ENCODE measurements at regions of chr13 and their contacts with region 1.

Region 1: GRCh38 chr13:71879129-71879535 is 12.1 kb upstream of the DACH1 start:
- DNase-seq: peak in 4 of 9 donors; percentile 18 to 49 (median 34)
- ATAC-seq: peak; percentile 75
- H3K4me3 ChIP-seq: no peak overlapping the region
- H3K4me3 Mint-ChIP-seq: peak overlapping the region in 1 of 10 donors; percentile 36
- H3K27ac ChIP-seq: no peak overlapping the region
- H3K27ac Mint-ChIP-seq: no peak overlapping the region
- H3K4me1 ChIP-seq: no peaks in the 10 kb centered on the region
- H3K4me1 Mint-ChIP-seq: peaks cover 0 to 12% (median 3%) of the 10 kb centered on the region in 7 donors
- H3K27me3 ChIP-seq: no peaks in the 10 kb centered on the region
- H3K27me3 Mint-ChIP-seq: peaks cover 0 to 3% (median 0%) of the 10 kb centered on the region in 5 donors

Region 2: GRCh38 chr13:70623239-70623638 is 1255.9 kb before region 1 on chr13:
- CTCF ChIA-PET with region 1: no interaction called
- POLR2A ChIA-PET with region 1: no interaction called
- intact Hi-C with region 1: loop called in 1 of 2 experiments (anchors 2 kb)
- DNase-seq: no peak
- ATAC-seq: no peak
- H3K4me3 ChIP-seq: no peak overlapping the region
- H3K4me3 Mint-ChIP-seq: no peak overlapping the region
- H3K27ac ChIP-seq: no peak overlapping the region
- H3K27ac Mint-ChIP-seq: no peak overlapping the region
- H3K4me1 ChIP-seq: no peaks in the 10 kb centered on the region
- H3K4me1 Mint-ChIP-seq: no peaks in the 10 kb centered on the region
- H3K27me3 ChIP-seq: no peaks in the 10 kb centered on the region
- H3K27me3 Mint-ChIP-seq: no peaks in the 10 kb centered on the region

Region 3: GRCh38 chr13:70960841-70961443 is 918.2 kb before region 1 on chr13:
- CTCF ChIA-PET with region 1: no interaction called
- POLR2A ChIA-PET with region 1: no interaction called
- intact Hi-C with region 1: loop called in 1 of 2 experiments (anchors 1 kb)
- DNase-seq: peak in 2 of 9 donors; percentile 1 to 3
- ATAC-seq: no peak
- H3K4me3 ChIP-seq: no peak overlapping the region
- H3K4me3 Mint-ChIP-seq: no peak overlapping the region
- H3K27ac ChIP-seq: no peak overlapping the region
- H3K27ac Mint-ChIP-seq: no peak overlapping the region
- H3K4me1 ChIP-seq: no peaks in the 10 kb centered on the region
- H3K4me1 Mint-ChIP-seq: no peaks in the 10 kb centered on the region
- H3K27me3 ChIP-seq: no peaks in the 10 kb centered on the region
- H3K27me3 Mint-ChIP-seq: no peaks in the 10 kb centered on the region

Region 4: DNA sequence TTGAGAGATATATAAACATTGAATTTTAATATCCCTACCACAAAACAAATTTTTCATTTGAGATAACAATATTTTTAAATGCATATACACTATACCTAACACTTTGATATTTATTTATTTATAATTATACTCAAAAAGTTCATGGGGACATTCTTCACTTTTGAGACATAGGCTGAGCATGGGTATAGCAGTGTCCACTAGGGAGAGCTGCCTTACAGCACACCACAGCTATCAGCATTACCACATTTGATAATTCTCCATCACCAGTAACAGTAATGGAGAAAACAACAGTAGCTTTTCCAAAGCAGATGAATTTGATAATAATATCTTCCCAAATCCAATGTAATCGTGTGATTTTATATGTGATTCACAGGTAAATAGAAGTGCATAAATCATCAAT is 638.2 kb before region 1 on chr13:
- CTCF ChIA-PET with region 1: no interaction called
- POLR2A ChIA-PET with region 1: no interaction called
- intact Hi-C with region 1: loop called (anchors 2 to 5 kb)
- DNase-seq: no peak
- ATAC-seq: peak; percentile 40
- H3K4me3 ChIP-seq: no peak overlapping the region
- H3K4me3 Mint-ChIP-seq: no peak overlapping the region
- H3K27ac ChIP-seq: no peak overlapping the region
- H3K27ac Mint-ChIP-seq: no peak overlapping the region
- H3K4me1 ChIP-seq: no peaks in the 10 kb centered on the region
- H3K4me1 Mint-ChIP-seq: no peaks in the 10 kb centered on the region
- H3K27me3 ChIP-seq: no peaks in the 10 kb centered on the region
- H3K27me3 Mint-ChIP-seq: peaks cover 0 to 7% (median 0%) of the 10 kb centered on the region in 5 donors

Region 5: GRCh38 chr13:71285700-71286099 is 593.4 kb before region 1 on chr13:
- CTCF ChIA-PET with region 1: interaction called, 3 read pairs
- POLR2A ChIA-PET with region 1: no interaction called
- intact Hi-C with region 1: loop called in 1 of 2 experiments (anchors 1 kb)
- DNase-seq: peak in 4 of 9 donors; percentile 6 to 12 (median 9)
- ATAC-seq: no peak
- H3K4me3 ChIP-seq: no peak overlapping the region
- H3K4me3 Mint-ChIP-seq: no peak overlapping the region
- H3K27ac ChIP-seq: no peak overlapping the region
- H3K27ac Mint-ChIP-seq: no peak overlapping the region
- H3K4me1 ChIP-seq: peaks cover 0 to 6% of the 10 kb centered on the region in 2 donors
- H3K4me1 Mint-ChIP-seq: peaks cover 0 to 11% (median 5%) of the 10 kb centered on the region in 7 donors
- H3K27me3 ChIP-seq: no peaks in the 10 kb centered on the region
- H3K27me3 Mint-ChIP-seq: peaks cover 0 to 13% (median 6%) of the 10 kb centered on the region in 5 donors

Region 6: GRCh38 chr13:71320452-71320851 is 558.7 kb before region 1 on chr13:
- CTCF ChIA-PET with region 1: interaction called, 4 read pairs
- POLR2A ChIA-PET with region 1: no interaction called
- intact Hi-C with region 1: loop called in 1 of 2 experiments (anchors 1 kb)
- DNase-seq: no peak
- ATAC-seq: no peak
- H3K4me3 ChIP-seq: no peak overlapping the region
- H3K4me3 Mint-ChIP-seq: no peak overlapping the region
- H3K27ac ChIP-seq: no peak overlapping the region
- H3K27ac Mint-ChIP-seq: no peak overlapping the region
- H3K4me1 ChIP-seq: no peaks in the 10 kb centered on the region
- H3K4me1 Mint-ChIP-seq: no peaks in the 10 kb centered on the region
- H3K27me3 ChIP-seq: no peaks in the 10 kb centered on the region
- H3K27me3 Mint-ChIP-seq: no peaks in the 10 kb centered on the region

Region 7: GRCh38 chr13:71395053-71395452 is 484.1 kb before region 1 on chr13:
- CTCF ChIA-PET with region 1: no interaction called
- POLR2A ChIA-PET with region 1: no interaction called
- intact Hi-C with region 1: no loop called
- DNase-seq: no peak
- ATAC-seq: no peak
- H3K4me3 ChIP-seq: no peak overlapping the region
- H3K4me3 Mint-ChIP-seq: no peak overlapping the region
- H3K27ac ChIP-seq: no peak overlapping the region
- H3K27ac Mint-ChIP-seq: no peak overlapping the region
- H3K4me1 ChIP-seq: no peaks in the 10 kb centered on the region
- H3K4me1 Mint-ChIP-seq: no peaks in the 10 kb centered on the region
- H3K27me3 ChIP-seq: no peaks in the 10 kb centered on the region
- H3K27me3 Mint-ChIP-seq: no peaks in the 10 kb centered on the region